ENCODE measurements at regions of chr17 and their contacts with region 1.

Region 1: GRCh38 chr17:79382322-79382721 is 228.5 kb downstream of the RBFOX3 start:
- DNase-seq: no peak
- H3K4me3 ChIP-seq: no peak overlapping the region
- H3K27ac ChIP-seq: no peak overlapping the region
- H3K4me1 ChIP-seq: no peaks in the 10 kb centered on the region
- H3K27me3 ChIP-seq: no peaks in the 10 kb centered on the region
- CTCF ChIP-seq: no peak
- POLR2A ChIP-seq: no peak

Region 2: GRCh38 chr17:79338604-79339003 is 43.7 kb before region 1 on chr17:
- CTCF ChIA-PET with region 1: no interaction called
- POLR2A ChIA-PET with region 1: no interaction called
- dilution Hi-C with region 1: no loop called
- intact Hi-C with region 1: no loop called
- DNase-seq: no peak
- H3K4me3 ChIP-seq: no peak overlapping the region
- H3K27ac ChIP-seq: no peak overlapping the region
- H3K4me1 ChIP-seq: no peaks in the 10 kb centered on the region
- H3K27me3 ChIP-seq: no peaks in the 10 kb centered on the region
- CTCF ChIP-seq: no peak
- POLR2A ChIP-seq: no peak

Region 3: DNA sequence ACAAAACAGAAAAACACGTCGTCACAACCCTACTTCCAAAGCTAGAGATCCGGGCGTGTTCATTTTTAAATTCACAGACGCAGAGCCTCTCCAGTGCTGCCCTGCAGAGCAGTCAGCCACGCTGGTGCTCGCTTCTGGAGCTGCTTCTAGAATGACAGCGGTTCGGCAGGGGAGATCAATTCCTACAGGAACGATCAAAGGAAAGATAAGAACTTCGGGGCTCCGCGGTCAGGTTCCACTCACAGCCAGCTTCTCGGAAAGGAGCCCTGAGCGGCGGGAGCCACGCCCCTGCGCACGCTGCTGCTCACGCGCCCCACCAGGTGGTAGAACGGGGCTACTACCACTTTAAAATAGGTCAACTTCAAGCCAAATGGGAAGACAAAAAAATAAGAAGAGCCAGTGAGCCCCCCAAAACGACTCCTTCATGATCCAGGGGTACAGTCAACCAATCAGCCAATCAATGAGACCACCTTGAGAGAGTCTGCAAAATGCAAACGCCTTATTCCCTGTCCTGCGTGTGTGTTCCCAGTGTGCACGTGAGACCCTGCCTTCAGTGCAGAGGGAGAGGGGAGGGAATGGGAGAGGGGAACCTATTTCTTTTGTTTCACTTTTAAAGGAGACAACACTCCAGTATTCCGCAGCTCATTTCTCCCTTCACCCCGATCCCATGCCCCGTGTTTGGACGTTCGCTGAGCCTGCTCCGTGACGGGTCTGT is 18.8 kb after region 1 on chr17:
- CTCF ChIA-PET with region 1: interaction called, 14 read pairs
- POLR2A ChIA-PET with region 1: no interaction called
- dilution Hi-C with region 1: no loop called
- intact Hi-C with region 1: no loop called
- DNase-seq: peak; percentile 73
- H3K4me3 ChIP-seq: no peak overlapping the region
- H3K27ac ChIP-seq: no peak overlapping the region
- H3K4me1 ChIP-seq: peaks cover 4% of the 10 kb centered on the region
- H3K27me3 ChIP-seq: peaks cover 6 to 10% of the 10 kb centered on the region in 2 experiments
- CTCF ChIP-seq: peak; percentile 87 to 92
- POLR2A ChIP-seq: no peak